ENCODE measurements at regions of chr12 and their contacts with region 1.

Region 1: DNA sequence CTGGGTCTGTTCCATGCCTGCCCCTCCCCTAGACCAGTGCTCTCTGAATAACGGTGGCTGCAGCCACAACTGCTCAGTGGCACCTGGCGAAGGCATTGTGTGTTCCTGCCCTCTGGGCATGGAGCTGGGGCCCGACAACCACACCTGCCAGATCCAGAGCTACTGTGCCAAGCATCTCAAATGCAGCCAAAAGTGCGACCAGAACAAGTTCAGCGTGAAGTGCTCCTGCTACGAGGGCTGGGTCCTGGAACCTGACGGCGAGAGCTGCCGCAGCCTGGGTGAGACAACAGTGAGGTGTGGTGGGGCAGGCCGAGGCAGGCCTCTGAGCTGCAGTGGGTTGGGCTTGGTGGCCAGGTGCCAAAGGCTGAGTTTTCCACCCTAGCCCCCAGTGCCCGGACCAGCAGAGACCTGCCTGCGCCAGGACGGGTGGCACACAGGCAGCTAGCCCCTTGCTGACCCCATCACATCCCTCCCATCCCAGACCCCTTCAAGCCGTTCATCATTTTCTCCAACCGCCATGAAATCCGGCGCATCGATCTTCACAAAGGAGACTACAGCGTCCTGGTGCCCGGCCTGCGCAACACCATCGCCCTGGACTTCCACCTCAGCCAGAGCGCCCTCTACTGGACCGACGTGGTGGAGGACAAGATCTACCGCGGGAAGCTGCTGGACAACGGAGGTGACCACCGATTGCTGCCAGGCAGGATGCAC is 28.2 kb upstream of the LRP1-AS start:
- DNase-seq: peak; percentile 79 to 88
- ATAC-seq: peak; percentile 67 to 90
- H3K4me3 ChIP-seq: no peak overlapping the region
- H3K27ac ChIP-seq: peak overlapping the region; percentile 28 to 64; a peak in 3 of 6 replicates
- H3K4me1 ChIP-seq: peaks cover 16% of the 10 kb centered on the region; the same call in 2 of the 3 replicates
- CTCF ChIP-seq: peak; percentile 83
- EP300 ChIP-seq: no peak
- POLR2A ChIP-seq: no peak
- RAD21 ChIP-seq: peak; percentile 72 to 75

Region 2: GRCh38 chr12:56836800-56837663 is 338.6 kb before region 1 on chr12:
- CTCF ChIA-PET with region 1: no interaction called
- POLR2A ChIA-PET with region 1: no interaction called
- DNase-seq: peak in 1 of 2 experiments; percentile 33
- ATAC-seq: peak in 1 of 2 experiments; percentile 37; a peak in 1 of 6 replicates
- H3K4me3 ChIP-seq: no peak overlapping the region
- H3K27ac ChIP-seq: peak overlapping the region in 1 of 2 experiments; percentile 31; a peak in 1 of 6 replicates
- H3K4me1 ChIP-seq: peaks cover 27% of the 10 kb centered on the region; the same call in 2 of the 3 replicates
- CTCF ChIP-seq: no peak
- EP300 ChIP-seq: no peak
- POLR2A ChIP-seq: no peak
- RAD21 ChIP-seq: no peak

Region 3: GRCh38 chr12:57069523-57069922 is 106.1 kb before region 1 on chr12:
- CTCF ChIA-PET with region 1: interaction called, 44 read pairs
- POLR2A ChIA-PET with region 1: no interaction called
- DNase-seq: peak; percentile 48 to 86
- ATAC-seq: peak; percentile 99
- H3K4me3 ChIP-seq: no peak overlapping the region
- H3K27ac ChIP-seq: peak overlapping the region in 1 of 2 experiments; percentile 68; a peak in 3 of 6 replicates
- H3K4me1 ChIP-seq: 0 out of 3 replicates have a peak, but pooled peaks cover 4% of the 10 kb centered on the region
- CTCF ChIP-seq: peak; percentile 94
- EP300 ChIP-seq: no peak
- POLR2A ChIP-seq: no peak
- RAD21 ChIP-seq: peak; percentile 94 to 97

Region 4: GRCh38 chr12:57078519-57079404 is 96.8 kb before region 1 on chr12 and contains the start of gene NEMP1:
- CTCF ChIA-PET with region 1: interaction called, 15 read pairs
- POLR2A ChIA-PET with region 1: interaction called, 4 read pairs
- DNase-seq: peak; percentile 97 to 100
- ATAC-seq: peak; percentile 99 to 100
- H3K4me3 ChIP-seq: peak within 1 kb of the TSS; percentile 78
- H3K27ac ChIP-seq: peak within 1 kb of the TSS; percentile 77 to 92
- H3K4me1 ChIP-seq: peaks cover 10% of the 10 kb centered on the region; the same call in 2 of the 3 replicates
- CTCF ChIP-seq: no peak
- EP300 ChIP-seq: no peak
- POLR2A ChIP-seq: peak; percentile 45
- RAD21 ChIP-seq: no peak
- polyA plus RNA-seq, gene NEMP1: 24.7 and 28.4 TPM in 2 replicates

Region 5: GRCh38 chr12:57101844-57102695 is 73.5 kb before region 1 on chr12:
- CTCF ChIA-PET with region 1: interaction called, 11 read pairs
- POLR2A ChIA-PET with region 1: no interaction called
- DNase-seq: peak; percentile 66 to 74
- ATAC-seq: peak; percentile 58 to 65
- H3K4me3 ChIP-seq: no peak overlapping the region
- H3K27ac ChIP-seq: peak overlapping the region; percentile 13 to 68; a peak in 4 of 6 replicates
- H3K4me1 ChIP-seq: peaks cover 19% of the 10 kb centered on the region
- CTCF ChIP-seq: no peak
- EP300 ChIP-seq: no peak
- POLR2A ChIP-seq: no peak
- RAD21 ChIP-seq: no peak

Region 6: GRCh38 chr12:57135527-57136326 is 39.9 kb before region 1 on chr12:
- CTCF ChIA-PET with region 1: interaction called, 1,152 read pairs
- POLR2A ChIA-PET with region 1: no interaction called
- DNase-seq: no peak
- ATAC-seq: no peak
- H3K4me3 ChIP-seq: no peak overlapping the region
- H3K27ac ChIP-seq: peak overlapping the region in 1 of 2 experiments; percentile 45; a peak in 3 of 6 replicates
- H3K4me1 ChIP-seq: peaks cover 34% of the 10 kb centered on the region
- CTCF ChIP-seq: no peak
- EP300 ChIP-seq: no peak
- POLR2A ChIP-seq: no peak
- RAD21 ChIP-seq: no peak

Region 7: DNA sequence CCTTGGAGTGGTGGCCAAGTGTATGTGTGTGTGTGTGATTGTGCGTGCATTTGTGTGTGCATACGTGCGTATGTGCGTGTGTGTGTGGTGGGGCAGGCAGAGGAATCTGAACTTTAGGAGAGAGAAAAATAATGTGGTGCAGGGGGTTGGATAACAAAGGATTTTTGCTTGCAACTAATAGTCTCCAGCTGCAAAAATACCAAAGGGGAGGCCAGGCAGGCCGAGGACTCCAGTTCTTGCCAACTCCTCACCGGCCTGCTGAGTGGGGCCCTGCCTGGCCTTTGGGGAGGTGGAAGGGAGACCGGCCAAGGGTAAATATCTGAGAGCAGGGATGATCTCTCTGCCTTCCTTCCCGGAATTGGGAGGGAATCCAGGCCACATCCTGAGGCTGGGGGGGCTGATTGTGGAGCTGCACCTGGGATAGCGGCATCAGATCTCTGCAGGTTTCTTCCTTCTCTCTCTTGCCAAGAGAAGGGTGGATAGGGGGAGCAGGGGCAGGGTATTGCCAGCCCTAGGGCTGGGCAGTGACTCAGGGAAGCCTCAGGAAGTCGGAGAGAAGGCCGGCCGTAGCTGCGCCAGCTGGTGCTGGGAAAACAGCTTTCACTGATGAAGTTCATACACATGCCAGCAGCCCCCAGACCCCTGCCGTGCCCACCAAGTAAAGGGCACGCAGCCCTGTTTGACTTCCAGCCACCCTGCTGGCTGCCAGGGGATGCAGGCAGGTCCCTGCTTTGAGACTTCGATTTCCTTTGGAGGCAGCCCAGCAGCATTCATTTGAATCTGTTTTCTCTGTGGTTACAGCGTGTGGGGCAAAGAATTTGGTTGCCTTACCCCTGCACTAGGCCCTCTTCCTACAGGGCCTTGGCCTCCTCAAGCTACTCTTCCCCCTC is 23.6 kb before region 1 on chr12:
- CTCF ChIA-PET with region 1: interaction called, 180 read pairs
- POLR2A ChIA-PET with region 1: no interaction called
- DNase-seq: no peak
- ATAC-seq: peak in 1 of 2 experiments; percentile 12; a peak in 1 of 6 replicates
- H3K4me3 ChIP-seq: no peak overlapping the region
- H3K27ac ChIP-seq: no peak overlapping the region
- H3K4me1 ChIP-seq: peaks cover 24% of the 10 kb centered on the region
- CTCF ChIP-seq: no peak
- EP300 ChIP-seq: no peak
- POLR2A ChIP-seq: no peak
- RAD21 ChIP-seq: no peak

Region 8: GRCh38 chr12:57213058-57213715 is 37.6 kb after region 1 on chr12:
- CTCF ChIA-PET with region 1: interaction called, 10 read pairs
- POLR2A ChIA-PET with region 1: no interaction called
- DNase-seq: peak; percentile 89 to 94
- ATAC-seq: peak; percentile 51 to 75
- H3K4me3 ChIP-seq: no peak overlapping the region
- H3K27ac ChIP-seq: peak overlapping the region in 1 of 2 experiments; percentile 67; a peak in 4 of 6 replicates
- H3K4me1 ChIP-seq: peaks cover 31% of the 10 kb centered on the region
- CTCF ChIP-seq: peak; percentile 90
- EP300 ChIP-seq: no peak
- POLR2A ChIP-seq: no peak
- RAD21 ChIP-seq: peak; percentile 78 to 85

Measured in A549 (cell line).